Activated naive CD4-positive, alpha-beta T cell treated with anti-CD3 and anti-CD28 coated beads for 36 hours (primary cell): ENCODE measurements at regions of chr17 and their contacts with region 1.

Region 1: GRCh38 chr17:16215273-16215964 is at the start of gene NCOR1:
- DNase-seq: peak; percentile 93
- H3K4me3 Mint-ChIP-seq: peak within 1 kb of the TSS; percentile 99
- H3K27ac Mint-ChIP-seq: peak within 1 kb of the TSS; percentile 95
- H3K4me1 Mint-ChIP-seq: peaks cover 44% of the 10 kb centered on the region
- H3K27me3 Mint-ChIP-seq: no peaks in the 10 kb centered on the region
- total RNA-seq, gene NCOR1: 101 to 104 TPM

Region 2: DNA sequence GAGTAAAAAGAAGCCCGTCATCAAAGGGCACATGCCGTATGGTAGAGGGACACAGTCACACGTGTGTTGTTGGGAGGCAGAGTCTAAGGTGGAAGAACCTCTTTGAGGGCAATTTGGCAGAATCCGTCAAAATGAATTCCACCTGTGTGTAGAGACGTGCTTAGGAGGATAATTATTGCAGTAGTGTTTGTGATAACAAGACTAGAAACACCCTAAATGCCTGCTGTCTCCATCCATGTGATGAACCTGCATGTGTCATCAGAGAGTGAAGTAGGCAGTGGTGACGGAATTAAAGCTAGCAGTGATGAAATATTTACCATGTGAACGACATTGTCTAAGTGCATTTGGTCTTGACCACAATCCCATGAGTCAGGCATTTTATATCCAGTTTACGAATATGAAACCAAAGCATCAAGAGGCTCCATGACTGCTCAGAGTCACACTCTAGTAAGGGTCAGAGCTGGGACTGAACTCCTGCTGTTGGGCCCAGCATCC is 331.8 kb before region 1 on chr17:
- CTCF ChIA-PET with region 1: no interaction called
- intact Hi-C with region 1: no loop called
- DNase-seq: no peak
- H3K4me3 Mint-ChIP-seq: no peak overlapping the region
- H3K27ac Mint-ChIP-seq: no peak overlapping the region
- H3K4me1 Mint-ChIP-seq: peaks cover 20% of the 10 kb centered on the region
- H3K27me3 Mint-ChIP-seq: no peaks in the 10 kb centered on the region

Region 3: DNA sequence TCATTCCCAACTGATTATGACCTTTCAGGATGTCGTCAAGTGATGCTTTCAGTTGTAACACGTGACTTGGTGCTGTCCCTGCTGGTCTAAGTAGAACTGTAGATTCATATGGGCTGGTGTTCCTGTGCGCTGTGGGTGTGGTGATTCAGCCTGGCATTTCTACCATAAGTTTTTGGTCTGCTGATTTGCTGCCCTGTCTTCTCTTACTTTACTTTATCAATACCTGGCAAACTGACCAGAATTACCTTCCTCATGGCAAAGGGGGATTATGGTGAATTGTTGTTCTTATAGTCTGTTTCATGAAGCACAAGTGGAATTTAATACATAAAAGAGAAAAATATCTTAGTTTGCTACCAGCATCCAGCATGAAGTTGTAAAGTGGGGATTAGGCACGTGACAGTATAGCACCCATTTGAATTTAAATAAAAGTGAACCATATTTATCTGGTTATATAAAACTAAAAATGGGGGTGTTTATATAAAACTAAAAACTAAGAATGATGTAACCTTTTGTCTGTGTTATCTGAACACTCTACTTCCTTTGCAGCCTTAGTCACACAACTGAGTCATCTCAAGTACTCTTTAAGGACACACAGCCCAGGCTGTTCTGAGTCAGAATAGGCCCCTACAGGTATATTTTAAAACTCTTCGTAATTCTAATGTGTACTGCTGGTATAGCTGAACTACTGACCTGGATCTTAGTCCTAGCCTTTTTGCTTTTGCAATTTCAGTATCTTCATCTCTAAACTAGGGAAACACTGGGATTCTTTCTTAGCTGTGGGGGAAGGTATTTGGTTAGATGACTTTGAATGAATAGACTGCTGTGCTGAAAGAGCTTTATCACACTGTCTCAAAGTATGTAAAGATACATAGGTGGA is 187.5 kb before region 1 on chr17:
- CTCF ChIA-PET with region 1: no interaction called
- intact Hi-C with region 1: loop called (anchors 1 kb)
- DNase-seq: peak; percentile 82
- H3K4me3 Mint-ChIP-seq: peak overlapping the region; percentile 52
- H3K27ac Mint-ChIP-seq: peak overlapping the region; percentile 97
- H3K4me1 Mint-ChIP-seq: peaks cover 40% of the 10 kb centered on the region
- H3K27me3 Mint-ChIP-seq: no peaks in the 10 kb centered on the region

Region 4: DNA sequence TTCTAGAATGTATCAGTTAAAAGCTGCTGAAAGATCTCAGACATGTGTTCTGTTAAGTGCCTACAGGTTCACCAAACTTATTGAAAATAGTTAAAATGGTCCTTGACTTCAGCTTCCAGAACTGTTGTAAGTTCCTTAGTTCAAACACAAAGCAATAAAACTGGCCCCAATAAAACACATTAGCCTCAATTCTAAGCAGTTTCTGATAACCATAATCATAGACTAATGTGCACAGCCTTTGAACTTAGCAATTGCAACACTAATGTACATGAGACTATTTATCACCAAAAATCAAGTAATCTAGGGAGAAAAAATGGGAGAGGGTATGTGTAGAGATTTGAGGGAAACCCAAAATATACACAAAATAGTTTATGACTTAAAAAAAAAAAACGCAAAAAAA is 17.0 kb after region 1 on chr17:
- CTCF ChIA-PET with region 1: interaction called, 4 read pairs
- intact Hi-C with region 1: loop called (anchors 1 kb)
- DNase-seq: no peak
- H3K4me3 Mint-ChIP-seq: no peak overlapping the region
- H3K27ac Mint-ChIP-seq: no peak overlapping the region
- H3K4me1 Mint-ChIP-seq: peaks cover 24% of the 10 kb centered on the region
- H3K27me3 Mint-ChIP-seq: no peaks in the 10 kb centered on the region

Region 5: GRCh38 chr17:16353317-16354174 is 138.1 kb after region 1 on chr17 and contains the start of gene CENPV:
- CTCF ChIA-PET with region 1: interaction called, 3 read pairs
- intact Hi-C with region 1: loop called (anchors 2 kb)
- DNase-seq: peak; percentile 62
- H3K4me3 Mint-ChIP-seq: peak within 1 kb of the TSS; percentile 96
- H3K27ac Mint-ChIP-seq: peak within 1 kb of the TSS; percentile 77
- H3K4me1 Mint-ChIP-seq: peaks cover 22% of the 10 kb centered on the region
- H3K27me3 Mint-ChIP-seq: no peaks in the 10 kb centered on the region
- total RNA-seq, gene CENPV: 117 to 121 TPM

Region 6: DNA sequence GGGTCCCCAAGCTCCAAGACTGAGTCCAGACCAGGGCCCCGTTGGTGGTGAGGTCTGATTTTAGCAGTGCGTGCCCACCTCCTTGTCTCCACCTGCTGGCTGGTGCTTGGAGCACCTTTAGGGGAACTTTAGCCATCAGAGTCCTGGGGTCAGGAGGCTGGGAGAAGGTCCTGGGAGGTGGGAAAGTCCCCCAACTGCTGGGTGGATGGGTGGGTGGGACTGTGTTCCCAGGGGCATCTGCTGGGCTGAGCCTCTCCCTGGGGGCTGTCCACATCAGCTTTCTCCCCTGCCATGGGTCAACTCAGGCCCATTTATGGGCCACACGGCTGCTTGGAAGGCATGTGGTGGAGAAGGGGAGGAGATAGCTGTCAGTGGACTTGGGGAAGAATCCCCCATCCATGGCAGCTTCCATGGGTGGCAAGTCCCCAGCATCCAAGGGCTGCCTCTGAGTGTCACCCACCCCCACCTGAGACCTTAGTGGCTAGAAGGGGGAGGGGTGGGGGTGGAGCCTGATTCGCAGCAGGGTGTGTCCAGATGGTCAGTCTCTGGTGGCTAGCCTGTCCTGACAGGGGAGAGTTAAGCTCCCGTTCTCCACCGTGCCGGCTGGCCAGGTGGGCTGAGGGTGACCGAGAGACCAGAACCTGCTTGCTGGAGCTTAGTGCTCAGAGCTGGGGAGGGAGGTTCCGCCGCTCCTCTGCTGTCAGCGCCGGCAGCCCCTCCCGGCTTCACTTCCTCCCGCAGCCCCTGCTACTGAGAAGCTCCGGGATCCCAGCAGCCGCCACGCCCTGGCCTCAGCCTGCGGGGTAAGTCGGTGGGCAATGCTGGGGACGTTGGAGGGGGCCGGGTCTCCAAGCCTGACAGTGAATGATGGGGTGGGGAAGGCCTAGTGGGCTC is 199.9 kb after region 1 on chr17 and contains the start of gene TRPV2:
- CTCF ChIA-PET with region 1: no interaction called
- intact Hi-C with region 1: loop called (anchors 2 kb)
- DNase-seq: peak; percentile 67
- H3K4me3 Mint-ChIP-seq: peak within 1 kb of the TSS; percentile 98
- H3K27ac Mint-ChIP-seq: peak within 1 kb of the TSS; percentile 100
- H3K4me1 Mint-ChIP-seq: peaks cover 43% of the 10 kb centered on the region
- H3K27me3 Mint-ChIP-seq: no peaks in the 10 kb centered on the region
- total RNA-seq, gene TRPV2: 23.7 to 24.8 TPM

Region 7: GRCh38 chr17:16653209-16654041 is 438.0 kb after region 1 on chr17 and contains the start of gene ZNF624:
- CTCF ChIA-PET with region 1: no interaction called
- intact Hi-C with region 1: loop called (anchors 5 kb)
- DNase-seq: peak; percentile 91
- H3K4me3 Mint-ChIP-seq: peak within 1 kb of the TSS; percentile 82
- H3K27ac Mint-ChIP-seq: peak within 1 kb of the TSS; percentile 33
- H3K4me1 Mint-ChIP-seq: peaks cover 17% of the 10 kb centered on the region
- H3K27me3 Mint-ChIP-seq: peaks cover 2% of the 10 kb centered on the region
- total RNA-seq, gene ZNF624: 3.9 TPM

Region 8: GRCh38 chr17:17280613-17281549 is 1065.5 kb after region 1 on chr17 and contains the start of gene COPS3:
- CTCF ChIA-PET with region 1: no interaction called
- intact Hi-C with region 1: loop called (anchors 5 kb)
- DNase-seq: peak; percentile 99
- H3K4me3 Mint-ChIP-seq: peak within 1 kb of the TSS; percentile 94
- H3K27ac Mint-ChIP-seq: peak within 1 kb of the TSS; percentile 88
- H3K4me1 Mint-ChIP-seq: peaks cover 39% of the 10 kb centered on the region
- H3K27me3 Mint-ChIP-seq: no peaks in the 10 kb centered on the region
- total RNA-seq, gene COPS3: 103 to 104 TPM